GM10248 (cell line): ENCODE measurements at regions of chr17 and their contacts with region 1.

Region 1: DNA sequence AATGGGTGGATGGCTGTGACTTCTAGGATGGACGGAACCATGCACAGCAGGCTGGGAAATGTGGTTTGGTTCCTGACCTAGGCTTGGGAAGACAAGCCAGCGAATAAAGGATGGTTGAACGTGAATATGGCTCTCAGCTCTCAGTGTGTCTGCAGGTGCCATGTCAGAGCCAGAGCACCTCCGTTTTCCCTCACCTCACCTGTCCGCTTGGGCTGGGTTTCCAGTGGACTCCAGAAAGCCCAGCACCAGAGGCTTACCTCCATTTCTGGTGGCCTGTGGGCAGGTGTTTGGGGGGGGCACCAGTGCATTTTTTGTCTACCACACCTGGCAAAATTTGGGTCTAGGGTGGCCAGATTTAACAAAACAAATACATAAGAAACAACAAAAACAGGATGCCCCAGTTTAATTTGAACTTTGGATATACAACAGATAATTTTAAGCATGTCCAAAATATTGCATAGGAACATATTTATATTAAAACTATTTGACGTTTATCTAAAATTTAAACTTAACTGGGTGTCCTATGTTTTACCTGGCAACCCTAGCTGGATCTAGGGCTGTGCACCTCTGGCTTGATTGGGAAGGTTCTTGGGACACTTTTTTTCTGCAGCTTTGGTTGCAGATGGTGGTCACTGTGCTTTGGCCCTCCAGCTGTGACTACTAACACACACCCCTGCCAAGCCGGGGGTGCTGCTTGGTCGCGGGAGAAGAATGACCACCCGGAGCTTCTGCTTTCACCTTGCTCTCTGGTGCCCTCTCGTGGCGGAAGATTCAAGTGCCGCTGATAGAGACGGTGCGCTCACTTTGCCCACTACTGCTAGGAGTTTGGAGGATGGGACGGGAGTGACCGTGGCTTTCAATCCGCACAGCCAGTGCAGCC is 6.3 kb downstream of the SPACA3 start:
- DNase-seq: peak; percentile 82
- CTCF ChIP-seq: peak; percentile 91

Region 2: DNA sequence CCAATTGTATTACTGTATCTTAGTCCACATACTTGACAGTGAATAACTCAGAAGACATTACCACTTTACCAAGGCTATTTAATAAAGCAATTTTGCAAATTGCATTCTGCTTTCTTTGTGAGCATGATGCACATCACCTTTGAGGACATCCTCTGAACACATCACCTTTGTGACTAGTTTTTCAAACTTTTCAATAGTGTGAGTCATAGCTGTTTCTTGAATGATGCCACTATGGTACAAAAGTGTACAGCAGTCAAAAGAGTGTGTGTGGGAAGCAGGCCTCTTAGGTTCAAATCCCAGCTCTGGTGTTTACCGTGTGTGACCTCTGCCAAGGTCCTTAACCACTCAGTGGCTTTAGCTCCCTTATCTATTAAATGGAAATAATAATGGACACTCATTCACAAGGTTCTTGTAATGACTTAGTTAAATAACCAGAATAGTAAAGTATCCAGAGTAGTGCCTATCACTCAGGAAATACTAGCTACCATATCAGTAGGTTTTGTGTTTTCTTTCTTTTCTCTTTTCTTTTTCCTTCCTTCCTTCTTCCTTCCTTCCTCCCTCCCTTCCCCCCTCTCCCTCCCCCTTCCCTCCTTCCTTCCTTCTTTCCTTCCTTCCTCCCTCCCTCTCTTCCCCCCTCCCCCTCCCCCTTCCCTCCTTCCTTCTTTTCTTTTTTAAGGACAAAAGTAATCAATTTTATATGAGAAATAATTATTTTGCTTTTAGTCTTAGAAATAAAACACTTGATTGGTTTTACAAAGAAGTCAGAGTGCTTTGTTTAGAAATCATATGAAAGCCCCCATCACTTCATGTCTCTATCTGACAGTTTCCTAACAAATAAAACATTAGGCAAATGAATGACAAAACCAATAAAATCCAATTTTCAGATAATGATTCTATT is 300.0 kb before region 1 on chr17:
- CTCF ChIA-PET with region 1: no interaction called
- POLR2A ChIA-PET with region 1: no interaction called
- DNase-seq: no peak
- CTCF ChIP-seq: no peak

Region 3: GRCh38 chr17:32903774-32904673 is 94.0 kb before region 1 on chr17:
- CTCF ChIA-PET with region 1: no interaction called
- POLR2A ChIA-PET with region 1: no interaction called
- DNase-seq: no peak
- CTCF ChIP-seq: no peak

Region 4: DNA sequence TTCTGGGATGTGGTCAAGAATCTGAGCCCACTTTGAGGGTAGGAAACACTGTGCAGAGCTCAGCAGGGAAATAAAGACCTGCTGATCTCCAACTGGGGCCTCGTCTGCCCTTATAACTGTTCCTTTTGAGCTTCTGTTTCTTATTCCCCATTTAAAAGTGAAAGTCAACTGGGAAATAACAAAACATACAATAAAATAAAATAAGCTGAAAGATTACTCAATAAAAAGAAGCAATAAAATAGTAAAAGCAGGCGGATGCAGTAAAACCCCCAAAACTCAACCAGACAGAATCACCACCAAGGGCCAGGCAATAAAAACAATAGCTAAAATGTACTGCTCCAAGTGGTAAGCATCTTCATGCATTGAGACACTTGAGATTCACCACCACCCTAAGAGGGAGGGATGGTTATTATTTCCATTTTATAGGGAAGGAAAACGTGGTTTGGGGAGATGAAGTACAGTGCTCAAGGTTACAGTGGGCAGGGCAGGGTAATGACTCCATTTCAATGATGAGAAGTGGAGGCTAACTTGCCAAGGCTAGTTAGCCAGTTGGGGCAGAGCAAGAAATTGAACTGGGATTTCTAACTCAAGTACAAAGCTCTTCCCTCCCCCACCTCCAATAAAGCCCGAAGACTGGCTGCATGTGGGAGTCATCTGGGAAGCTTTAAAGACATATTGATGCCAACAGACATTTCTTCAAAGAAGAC is 12.8 kb before region 1 on chr17:
- CTCF ChIA-PET with region 1: interaction called, 13 read pairs
- POLR2A ChIA-PET with region 1: no interaction called
- DNase-seq: no peak
- CTCF ChIP-seq: no peak

Region 5: GRCh38 chr17:33014366-33015150 is 16.6 kb after region 1 on chr17:
- CTCF ChIA-PET with region 1: interaction called, 28 read pairs
- POLR2A ChIA-PET with region 1: no interaction called
- DNase-seq: no peak
- CTCF ChIP-seq: no peak